ENCODE measurements at regions of chr3 and their contacts with region 1.

Region 1: GRCh38 chr3:194265483-194265892 is 85.6 kb downstream of the CPN2 start:
- DNase-seq: peak; percentile 95
- ATAC-seq: peak; percentile 83

Region 2: DNA sequence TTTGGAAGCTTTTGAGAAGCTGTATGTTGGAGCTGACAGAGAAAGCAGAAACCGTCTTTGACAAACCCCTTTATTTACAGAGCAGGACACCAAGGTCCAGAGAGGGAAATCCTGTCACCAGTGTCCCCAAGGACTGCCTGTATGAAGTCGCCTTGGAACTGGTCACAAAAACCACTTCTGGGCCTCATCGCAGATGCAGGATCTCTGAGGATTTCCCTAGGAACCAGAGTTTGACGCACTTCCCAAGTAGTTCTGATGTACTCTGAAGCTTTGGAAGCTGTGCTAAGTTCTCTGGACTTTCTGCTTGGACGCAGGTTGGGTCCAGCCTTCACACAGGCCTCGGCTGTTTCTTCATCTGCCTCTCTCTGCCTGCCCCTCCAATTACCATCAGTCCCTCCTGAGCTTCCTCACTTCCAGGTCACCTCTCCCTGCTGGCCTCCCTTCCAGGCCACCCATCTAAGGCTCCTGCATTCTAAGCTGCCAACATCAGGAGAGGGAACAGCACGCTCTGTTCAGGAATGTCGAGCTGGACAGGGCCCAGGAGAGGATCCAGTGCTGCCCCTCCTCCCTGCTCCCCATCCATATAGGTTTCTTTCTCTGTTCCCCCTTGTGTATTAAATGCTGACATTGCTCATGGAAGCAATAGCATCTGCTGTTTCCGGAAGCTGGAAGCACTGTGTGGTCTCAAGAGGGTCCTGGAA is 401.7 kb before region 1 on chr3:
- intact Hi-C with region 1: loop called (anchors 5 kb)
- DNase-seq: peak; percentile 68
- ATAC-seq: peak; percentile 84

Region 3: GRCh38 chr3:194003125-194004057 is 262.1 kb before region 1 on chr3:
- intact Hi-C with region 1: loop called (anchors 5 kb)
- DNase-seq: peak; percentile 94
- ATAC-seq: peak; percentile 91

Region 4: GRCh38 chr3:194070634-194071409 is 194.7 kb before region 1 on chr3:
- intact Hi-C with region 1: loop called (anchors 5 kb)
- DNase-seq: peak; percentile 92
- ATAC-seq: peak; percentile 89